ENCODE measurements at regions of chr19 and their contacts with region 1.

Region 1: DNA sequence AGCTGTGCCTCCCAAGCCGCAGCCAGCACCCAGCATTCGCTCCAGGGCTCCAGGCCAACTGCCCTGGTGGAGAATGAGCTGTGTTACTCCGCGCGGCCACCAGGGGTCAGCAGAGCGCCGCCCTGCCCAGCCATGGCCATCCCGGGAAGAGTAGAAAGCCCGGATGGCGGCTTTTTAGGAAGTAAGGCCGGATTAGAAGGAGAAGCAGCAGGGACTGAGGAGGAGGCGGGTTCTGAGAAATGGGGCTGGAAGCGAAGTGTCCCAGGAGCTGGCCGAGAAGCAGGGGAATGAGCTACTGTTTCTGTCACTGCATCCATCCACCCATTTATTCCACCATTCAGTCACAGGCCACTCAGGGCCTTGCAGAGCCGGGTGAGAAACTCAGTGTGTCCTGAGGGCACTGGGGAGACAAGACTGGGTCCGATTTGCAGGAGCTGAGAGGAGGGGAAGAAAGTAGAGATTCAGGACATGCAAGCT is 6.6 kb upstream of the NPAS1 start:
- DNase-seq: peak; percentile 85
- H3K4me3 ChIP-seq: no peak overlapping the region
- H3K27ac ChIP-seq: no peak overlapping the region
- H3K4me1 ChIP-seq: no peaks in the 10 kb centered on the region
- H3K27me3 ChIP-seq: no peaks in the 10 kb centered on the region
- CTCF ChIP-seq: peak; percentile 97

Region 2: DNA sequence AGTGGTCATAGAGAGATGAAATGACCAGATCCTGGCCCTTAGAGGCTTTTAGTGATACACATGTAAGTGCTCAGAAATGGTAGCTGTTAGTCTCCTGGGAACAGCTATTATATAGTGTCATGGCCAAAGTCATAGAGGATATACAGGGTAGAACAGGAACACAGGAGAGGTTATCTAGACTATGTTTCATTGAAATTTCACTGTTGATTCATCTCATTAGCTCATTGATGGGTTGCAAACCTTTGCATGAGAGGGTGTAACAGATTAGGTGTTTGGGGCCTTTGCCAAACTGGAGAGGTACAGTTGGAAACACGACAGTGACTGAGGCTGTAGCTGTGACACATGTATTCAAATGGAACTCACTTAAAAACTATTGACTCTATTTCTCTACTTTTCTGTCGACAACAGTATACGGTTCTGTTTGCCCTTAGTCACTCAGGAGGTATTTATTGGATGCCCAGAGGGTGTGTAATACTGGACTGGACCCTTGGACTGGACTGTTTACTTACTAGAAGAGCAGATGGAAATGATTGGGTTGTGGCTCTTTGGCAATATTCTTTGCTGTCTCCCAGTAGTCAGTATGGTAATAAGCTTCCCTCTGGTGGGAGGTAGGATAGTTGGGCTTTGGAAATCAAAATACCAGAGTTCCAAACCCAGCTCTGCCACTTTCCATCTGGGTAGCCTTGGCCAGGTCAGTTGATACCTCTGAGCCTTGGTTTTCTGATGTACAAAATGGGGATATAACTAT is 122.5 kb before region 1 on chr19:
- intact Hi-C with region 1: no loop called
- DNase-seq: peak; percentile 45
- H3K4me3 ChIP-seq: no peak overlapping the region
- H3K27ac ChIP-seq: peak overlapping the region; percentile 68
- H3K4me1 ChIP-seq: no peaks in the 10 kb centered on the region
- H3K27me3 ChIP-seq: no peaks in the 10 kb centered on the region
- CTCF ChIP-seq: no peak

Region 3: GRCh38 chr19:47075179-47075810 is 62.2 kb after region 1 on chr19:
- intact Hi-C with region 1: loop called (anchors 5 kb)
- DNase-seq: no peak
- H3K4me3 ChIP-seq: no peak overlapping the region
- H3K27ac ChIP-seq: no peak overlapping the region
- H3K4me1 ChIP-seq: peaks cover 3% of the 10 kb centered on the region
- H3K27me3 ChIP-seq: no peaks in the 10 kb centered on the region
- CTCF ChIP-seq: no peak

Measured in colonic mucosa (tissue), 4 donors.